H1 (cell line): ENCODE measurements at regions of chr1 and their contacts with region 1.

Region 1: GRCh38 chr1:156146020-156146768 is 7.2 kb upstream of the SEMA4A start:
- DNase-seq: no peak
- H3K4me3 ChIP-seq: peak overlapping the region in 1 of 4 experiments; percentile 35; a peak in 3 of 8 replicates
- H3K27ac ChIP-seq: peak overlapping the region; percentile 17; the same call in 1 of the 2 replicates
- H3K4me1 ChIP-seq: peaks cover 20 to 39% (median 29%) of the 10 kb centered on the region in 4 experiments
- H3K27me3 ChIP-seq: no peaks in the 10 kb centered on the region
- CTCF ChIP-seq: peak in 2 of 3 experiments; percentile 60 to 62; a peak in 3 of 4 replicates
- EP300 ChIP-seq: no peak
- POLR2A ChIP-seq: no peak
- RAD21 ChIP-seq: peak; percentile 74 to 79

Region 2: DNA sequence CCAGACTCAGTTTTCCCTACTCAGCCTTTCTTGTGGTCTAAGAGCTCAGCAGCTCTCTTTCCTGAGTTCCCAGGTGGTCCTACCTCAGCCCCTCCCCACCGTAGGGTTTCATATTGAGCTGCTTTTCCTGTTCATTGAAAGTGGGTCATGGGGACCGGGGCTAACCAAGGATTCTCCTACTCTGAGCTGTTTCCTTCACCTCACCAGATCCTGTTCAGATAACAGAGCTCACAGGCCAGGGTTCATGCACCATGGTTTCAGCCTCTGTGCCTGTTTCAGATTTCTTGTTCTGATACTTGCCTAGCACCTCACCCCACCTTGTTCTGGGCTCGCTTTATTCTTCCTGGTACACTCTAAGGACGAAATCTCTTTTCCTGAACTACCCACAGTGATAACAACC is 101.1 kb before region 1 on chr1:
- CTCF ChIA-PET with region 1: no interaction called
- POLR2A ChIA-PET with region 1: no interaction called
- DNase-seq: no peak
- H3K4me3 ChIP-seq: no peak overlapping the region
- H3K27ac ChIP-seq: no peak overlapping the region
- H3K4me1 ChIP-seq: no peaks in the 10 kb centered on the region
- H3K27me3 ChIP-seq: no peaks in the 10 kb centered on the region
- CTCF ChIP-seq: no peak
- EP300 ChIP-seq: no peak
- POLR2A ChIP-seq: no peak
- RAD21 ChIP-seq: no peak

Region 3: GRCh38 chr1:156160743-156161171 is 14.6 kb after region 1 on chr1:
- CTCF ChIA-PET with region 1: interaction called, 11 read pairs
- POLR2A ChIA-PET with region 1: interaction called, 19 read pairs
- DNase-seq: peak in 1 of 2 experiments; percentile 81
- H3K4me3 ChIP-seq: peak overlapping the region; percentile 32 to 68 (median 34); a peak in 7 of 8 replicates
- H3K27ac ChIP-seq: no peak overlapping the region
- H3K4me1 ChIP-seq: peaks cover 3 to 14% (median 10%) of the 10 kb centered on the region in 4 experiments; a peak in 6 of 7 replicates
- H3K27me3 ChIP-seq: no peaks in the 10 kb centered on the region
- CTCF ChIP-seq: no peak
- EP300 ChIP-seq: no peak
- POLR2A ChIP-seq: peak in 1 of 2 experiments; percentile 25; a peak in 1 of 3 replicates
- RAD21 ChIP-seq: no peak

Region 4: DNA sequence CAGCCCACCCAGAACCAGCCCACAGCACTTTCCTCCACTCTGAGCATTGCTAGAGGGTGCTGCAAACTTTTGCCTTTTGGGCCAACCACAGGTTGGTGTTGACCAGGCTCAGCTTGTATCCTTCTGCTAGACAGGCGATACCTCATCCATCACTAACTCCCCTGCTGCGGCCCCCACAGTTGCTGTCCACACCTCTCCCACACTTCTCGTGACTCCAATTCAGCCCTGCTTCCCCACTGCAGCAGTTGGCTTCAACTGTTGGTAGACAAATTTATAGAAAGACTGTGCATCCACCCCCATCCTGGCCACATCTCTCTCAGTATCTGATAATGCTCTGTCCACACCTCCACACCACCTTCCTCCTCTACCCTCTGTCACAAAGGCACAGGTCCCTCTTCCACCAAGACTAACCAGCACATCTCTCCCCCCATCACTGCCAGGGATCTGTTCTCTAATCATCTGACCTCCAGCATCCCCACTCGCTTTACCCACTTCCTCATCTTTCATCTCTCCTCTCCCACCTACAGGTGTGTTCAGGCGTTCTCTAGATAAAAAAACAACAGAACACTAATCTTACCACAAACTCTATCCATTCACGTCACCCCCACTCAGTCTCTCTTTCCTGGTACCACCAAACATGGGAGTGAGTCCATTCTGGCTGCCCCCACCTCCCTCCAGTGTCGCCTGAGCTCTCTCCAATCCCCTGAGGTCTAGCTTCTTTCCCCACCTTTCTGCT is 31.9 kb after region 1 on chr1:
- CTCF ChIA-PET with region 1: interaction called, 30 read pairs
- POLR2A ChIA-PET with region 1: interaction called, 27 read pairs
- DNase-seq: no peak
- H3K4me3 ChIP-seq: no peak overlapping the region
- H3K27ac ChIP-seq: no peak overlapping the region; the same call in 1 of the 2 replicates
- H3K4me1 ChIP-seq: peaks cover 6 to 21% (median 14%) of the 10 kb centered on the region in 4 experiments
- H3K27me3 ChIP-seq: no peaks in the 10 kb centered on the region
- CTCF ChIP-seq: no peak
- EP300 ChIP-seq: no peak
- POLR2A ChIP-seq: no peak
- RAD21 ChIP-seq: no peak

Region 5: DNA sequence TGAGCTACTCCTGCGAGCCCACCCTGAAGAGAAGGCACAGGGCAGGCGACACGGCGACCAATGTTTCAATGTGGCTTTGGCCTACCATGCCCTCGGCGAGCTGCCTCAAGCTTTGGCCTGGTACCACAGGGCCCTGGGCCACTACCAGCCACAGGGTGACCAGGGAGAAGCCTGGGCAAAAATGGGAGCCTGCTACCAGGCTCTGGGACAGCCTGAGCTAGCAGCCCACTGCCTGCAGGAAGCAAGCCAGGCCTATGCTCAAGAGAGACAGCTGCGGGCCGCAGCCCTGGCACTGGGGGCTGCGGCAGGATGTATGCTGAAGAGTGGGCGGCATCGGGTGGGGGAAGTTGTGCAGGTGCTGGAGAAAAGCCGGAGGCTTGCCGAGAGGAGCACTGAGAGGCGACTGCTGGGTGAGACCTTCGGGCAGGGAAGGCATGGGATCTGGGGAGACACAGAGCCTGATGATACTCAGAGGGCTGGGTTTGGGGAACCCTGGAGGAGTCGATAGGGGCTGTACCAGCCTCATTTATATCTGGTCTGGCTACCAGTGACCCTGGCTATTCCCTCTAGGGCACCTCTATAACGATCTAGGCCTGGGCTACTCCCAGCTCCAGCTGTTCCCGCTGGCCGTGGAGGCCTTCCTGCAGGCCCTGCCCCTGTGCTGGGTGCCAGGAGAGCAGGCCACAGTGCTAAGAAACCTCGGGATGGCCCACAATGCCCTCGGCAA is 435.6 kb after region 1 on chr1:
- CTCF ChIA-PET with region 1: no interaction called
- POLR2A ChIA-PET with region 1: no interaction called
- DNase-seq: no peak
- H3K4me3 ChIP-seq: no peak overlapping the region
- H3K27ac ChIP-seq: no peak overlapping the region
- H3K4me1 ChIP-seq: peaks cover 0 to 10% (median 3%) of the 10 kb centered on the region in 4 experiments; a peak in 5 of 7 replicates
- H3K27me3 ChIP-seq: no peaks in the 10 kb centered on the region
- CTCF ChIP-seq: no peak
- EP300 ChIP-seq: no peak
- POLR2A ChIP-seq: no peak
- RAD21 ChIP-seq: no peak